Activated CD4-positive, alpha-beta T cell treated with anti-CD3 and anti-CD28 coated beads, Interleukin-2, amount 10 ng/mL, durations not matched to agents 24 days and 14 days (primary cell): ENCODE measurements at regions of chr2 and their contacts with region 1.

Region 1: DNA sequence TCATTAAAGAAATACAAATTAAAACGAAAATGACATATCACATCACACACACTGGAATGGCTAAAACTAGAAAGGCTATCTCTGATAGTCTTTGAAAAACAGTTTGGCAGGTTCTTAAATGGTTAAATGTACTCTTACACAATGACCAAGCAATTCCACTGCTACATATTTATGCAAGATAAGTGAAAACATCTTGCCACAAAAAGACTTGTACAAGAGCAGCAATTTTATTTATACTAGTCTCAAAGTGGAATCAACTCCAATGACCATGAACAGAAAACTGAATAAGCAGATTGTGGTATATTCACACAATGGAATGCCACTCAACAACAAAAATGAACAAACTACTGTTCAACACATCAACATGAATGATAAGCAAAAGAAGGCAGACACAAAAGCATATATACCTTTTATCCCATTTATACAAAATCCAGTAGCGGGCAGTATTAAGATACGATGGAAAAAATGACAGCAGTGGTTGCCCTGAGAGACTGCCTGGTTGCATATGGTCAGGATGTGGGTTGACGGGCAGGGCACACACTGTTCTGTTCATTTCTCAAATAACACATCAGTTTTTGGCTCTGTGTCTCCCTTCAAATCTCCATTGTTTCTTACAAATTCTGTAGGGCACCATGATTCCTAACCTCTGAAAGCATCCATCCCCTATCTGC is 25.4 kb downstream of the SP100 start:
- DNase-seq: peak; percentile 82
- H3K4me3 Mint-ChIP-seq: peak overlapping the region; percentile 50
- H3K27ac Mint-ChIP-seq: peak overlapping the region; percentile 90
- H3K4me1 Mint-ChIP-seq: peaks cover 42% of the 10 kb centered on the region
- H3K27me3 Mint-ChIP-seq: no peaks in the 10 kb centered on the region

Region 2: GRCh38 chr2:230225486-230225885 is 215.9 kb before region 1 on chr2 and contains the start of gene SP140:
- intact Hi-C with region 1: loop called (anchors 5 kb)
- DNase-seq: peak; percentile 95
- H3K4me3 Mint-ChIP-seq: peak within 1 kb of the TSS; percentile 85
- H3K27ac Mint-ChIP-seq: peak within 1 kb of the TSS; percentile 98
- H3K4me1 Mint-ChIP-seq: peaks cover 62% of the 10 kb centered on the region
- H3K27me3 Mint-ChIP-seq: no peaks in the 10 kb centered on the region
- total RNA-seq, gene SP140: 236 and 241 TPM in 2 replicates